ENCODE measurements at regions of chr9 and their contacts with region 1.

Region 1: GRCh38 chr9:77751341-77752091 is 103.4 kb upstream of the GNA14 start:
- DNase-seq: no peak
- ATAC-seq: peak; percentile 72

Region 2: GRCh38 chr9:77433675-77434445 is 317.7 kb before region 1 on chr9:
- intact Hi-C with region 1: loop called (anchors 5 kb)
- DNase-seq: peak; percentile 82
- ATAC-seq: peak; percentile 80

Region 3: DNA sequence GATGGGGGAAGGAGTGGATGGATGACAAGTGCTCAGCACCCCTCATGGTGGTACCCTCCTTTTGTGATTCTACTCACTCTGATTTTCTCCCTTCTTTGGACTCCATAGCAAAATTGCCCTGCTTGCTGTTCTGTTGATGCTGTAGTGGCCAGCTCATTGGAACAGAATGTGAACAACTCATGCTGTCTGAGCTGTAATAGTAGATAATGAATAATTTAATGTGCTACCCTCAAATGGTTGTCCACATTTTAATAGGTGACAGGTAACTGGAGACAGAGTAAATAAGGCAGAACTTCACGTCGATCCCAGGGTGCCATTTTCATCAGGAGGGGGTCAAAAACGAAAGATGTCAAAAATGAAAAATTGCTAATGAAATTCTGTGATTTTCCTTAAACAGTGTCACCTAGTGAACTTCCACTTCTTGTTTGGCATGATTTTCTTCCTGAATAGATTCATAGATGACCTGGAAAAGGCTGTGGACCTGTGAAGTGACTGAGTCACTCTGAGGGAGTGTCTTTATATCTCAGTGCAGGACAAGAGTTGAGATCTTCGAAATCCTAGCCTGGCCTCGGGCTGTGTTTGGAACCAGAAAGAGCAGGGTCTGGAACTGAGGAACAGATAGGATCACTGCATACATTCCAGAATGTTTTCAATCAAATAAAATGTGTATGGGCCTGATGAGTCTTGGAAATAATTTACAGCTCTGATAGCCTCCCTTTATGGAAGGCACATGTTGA is 815.6 kb after region 1 on chr9:
- intact Hi-C with region 1: no loop called
- DNase-seq: no peak
- ATAC-seq: no peak

Measured in Right ventricle myocardium inferior (tissue), 1 donor.